Endothelial cell of umbilical vein (primary cell): ENCODE measurements at regions of chr2 and their contacts with region 1.

Region 1: DNA sequence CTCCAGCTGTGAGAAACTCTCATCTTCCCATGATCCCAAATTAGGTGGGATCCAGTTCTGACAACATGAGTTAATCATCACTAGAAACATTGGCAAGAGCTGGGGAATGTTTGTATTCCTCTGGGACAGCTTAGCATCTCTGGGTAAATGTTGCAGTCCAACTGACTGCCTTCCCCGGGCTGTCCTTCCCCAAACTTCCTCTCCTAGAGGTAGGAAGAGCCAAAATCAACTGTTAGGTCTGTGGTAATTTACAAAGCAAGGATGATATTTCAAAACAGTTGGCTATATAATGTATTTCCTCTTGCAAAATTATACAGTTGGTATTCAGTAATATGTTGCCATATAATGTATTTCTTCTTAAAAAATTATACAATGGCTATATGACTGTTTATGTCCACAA is 148.5 kb downstream of the MGAT5 start:
- DNase-seq: peak; percentile 21
- H3K4me3 ChIP-seq: no peak overlapping the region
- H3K27ac ChIP-seq: no peak overlapping the region
- H3K4me1 ChIP-seq: peaks cover 60% of the 10 kb centered on the region
- H3K27me3 ChIP-seq: no peaks in the 10 kb centered on the region
- CTCF ChIP-seq: no peak
- POLR2A ChIP-seq: no peak

Region 2: DNA sequence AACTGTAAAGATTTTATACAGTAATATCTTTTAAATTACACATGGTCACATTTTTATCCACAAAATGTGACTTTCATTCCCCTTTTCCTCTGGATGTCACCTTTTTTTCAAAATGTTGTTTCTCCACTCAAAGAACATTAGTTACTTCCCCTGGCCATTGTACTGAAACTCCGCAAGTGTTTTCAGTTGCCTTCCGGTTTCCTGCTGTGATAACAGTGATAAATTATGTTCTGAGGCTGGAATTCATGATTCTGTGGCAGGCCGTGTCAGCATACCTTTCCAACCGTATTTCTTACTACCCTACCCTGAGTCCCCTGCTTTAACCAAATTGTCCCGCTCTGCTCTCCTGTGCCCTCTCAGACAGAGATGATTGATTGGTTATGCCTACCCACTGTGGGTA is 95.1 kb before region 1 on chr2:
- CTCF ChIA-PET with region 1: no interaction called
- POLR2A ChIA-PET with region 1: no interaction called
- dilution Hi-C with region 1: no loop called
- intact Hi-C with region 1: loop called (anchors 1 kb)
- DNase-seq: peak; percentile 91
- H3K4me3 ChIP-seq: peak overlapping the region in 1 of 3 experiments; percentile 26
- H3K27ac ChIP-seq: peak overlapping the region; percentile 91
- H3K4me1 ChIP-seq: peaks cover 72% of the 10 kb centered on the region
- H3K27me3 ChIP-seq: no peaks in the 10 kb centered on the region
- CTCF ChIP-seq: no peak
- POLR2A ChIP-seq: peak; percentile 56

Region 3: GRCh38 chr2:134375935-134376334 is 26.5 kb before region 1 on chr2:
- CTCF ChIA-PET with region 1: interaction called, 8 read pairs
- POLR2A ChIA-PET with region 1: no interaction called
- dilution Hi-C with region 1: no loop called
- intact Hi-C with region 1: loop called (anchors 1 kb)
- DNase-seq: peak; percentile 64
- H3K4me3 ChIP-seq: no peak overlapping the region
- H3K27ac ChIP-seq: no peak overlapping the region
- H3K4me1 ChIP-seq: peaks cover 6% of the 10 kb centered on the region
- H3K27me3 ChIP-seq: no peaks in the 10 kb centered on the region
- CTCF ChIP-seq: peak; percentile 30 to 46
- POLR2A ChIP-seq: no peak

Region 4: DNA sequence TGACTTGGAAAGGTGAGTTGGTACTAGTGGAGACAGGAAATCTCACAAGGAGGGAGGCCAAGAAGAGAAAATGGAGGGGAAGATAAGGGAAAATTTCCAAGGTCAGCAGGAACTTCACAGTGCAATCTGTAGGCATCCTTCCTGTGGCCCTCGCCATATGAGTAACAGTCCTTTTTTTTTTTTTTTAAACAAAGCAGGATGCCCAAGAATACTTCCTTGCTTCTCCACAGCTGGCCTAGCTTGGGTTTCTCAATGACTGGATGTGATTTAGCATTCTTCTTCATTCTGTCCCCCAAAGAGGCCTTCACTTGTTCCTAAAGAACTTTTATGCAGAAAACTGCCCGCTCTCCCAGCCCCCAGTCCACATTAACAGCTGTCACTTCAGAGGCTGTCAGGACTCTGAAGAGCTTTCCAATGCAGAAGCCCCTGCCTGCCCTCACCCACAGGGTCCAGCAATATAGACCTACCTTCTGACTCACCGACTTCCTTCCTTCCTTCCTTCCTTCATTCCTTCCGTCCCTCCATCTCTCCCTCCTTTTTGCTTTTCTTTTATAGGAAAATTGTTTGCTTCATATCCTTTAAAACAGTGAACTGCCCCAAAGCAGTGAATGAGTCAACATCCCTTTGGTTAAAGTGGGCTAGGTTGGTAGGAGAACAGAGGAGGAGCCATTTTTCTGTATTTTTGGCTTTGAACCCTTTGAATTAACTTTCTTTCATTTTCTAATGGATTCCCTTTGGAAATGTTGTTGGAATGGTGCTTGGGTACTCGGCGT is 23.5 kb after region 1 on chr2:
- CTCF ChIA-PET with region 1: interaction called, 4 read pairs
- POLR2A ChIA-PET with region 1: no interaction called
- dilution Hi-C with region 1: no loop called
- intact Hi-C with region 1: loop called (anchors 1 kb)
- DNase-seq: peak; percentile 60
- H3K4me3 ChIP-seq: no peak overlapping the region
- H3K27ac ChIP-seq: peak overlapping the region; percentile 76
- H3K4me1 ChIP-seq: peaks cover 37% of the 10 kb centered on the region
- H3K27me3 ChIP-seq: no peaks in the 10 kb centered on the region
- CTCF ChIP-seq: no peak
- POLR2A ChIP-seq: no peak